HEK293 (cell line): ENCODE measurements at regions of chr6 and their contacts with region 1.

Region 1: DNA sequence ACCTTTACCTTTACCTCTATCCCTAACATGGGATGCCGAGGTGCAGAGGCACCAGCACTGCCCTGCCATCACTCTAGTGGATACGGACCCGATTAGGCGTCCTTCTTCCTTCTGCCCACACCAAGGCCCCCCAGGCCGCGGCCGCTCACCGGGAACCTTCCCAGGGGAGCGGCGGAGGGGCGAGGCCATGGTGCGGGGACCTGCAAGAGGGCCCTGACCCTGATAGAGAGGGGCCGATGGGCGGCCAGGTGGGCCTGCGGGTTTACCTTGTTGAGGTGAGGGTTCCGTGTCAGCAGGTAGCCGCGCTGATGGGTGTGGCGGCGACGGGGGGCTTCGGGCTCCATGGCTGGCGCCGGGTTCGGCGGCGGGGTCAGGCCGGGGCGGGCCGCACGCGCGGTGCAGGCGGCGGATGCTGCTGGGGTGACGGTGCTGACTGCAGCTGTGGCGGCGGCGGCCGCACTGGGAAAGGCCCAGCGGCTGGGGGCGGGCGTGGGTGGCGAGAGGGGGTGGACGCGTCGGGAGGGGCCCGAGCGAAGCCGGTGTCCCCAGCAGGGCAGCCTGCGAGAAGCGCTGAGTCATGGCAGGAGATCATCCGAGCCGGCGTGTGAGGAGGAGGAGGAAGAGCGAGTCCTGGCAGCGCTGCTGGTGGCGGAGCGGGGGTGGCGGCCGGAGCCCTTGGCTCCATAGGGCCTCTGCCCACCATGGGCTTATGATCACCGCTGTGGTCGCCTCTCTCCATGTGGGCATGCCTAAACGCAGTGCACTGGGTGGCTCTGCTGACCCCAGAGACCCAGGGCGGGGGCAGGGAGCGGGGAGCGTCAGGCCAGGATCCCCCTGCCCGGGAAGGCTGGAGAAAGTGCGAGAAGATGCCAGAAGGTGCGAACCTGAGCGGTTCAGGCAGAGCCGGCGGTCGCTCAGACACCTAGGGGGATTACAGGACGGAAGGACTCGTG is at the start of gene ME1:
- H3K4me3 ChIP-seq: peak within 1 kb of the TSS; percentile 83
- H3K27ac ChIP-seq: peak within 1 kb of the TSS; percentile 82
- H3K4me1 ChIP-seq: peaks cover 2% of the 10 kb centered on the region; the same call in 1 of the 2 replicates
- CTCF ChIP-seq: peak; percentile 77

Region 2: GRCh38 chr6:83514866-83515466 is 84.1 kb after region 1 on chr6:
- CTCF ChIA-PET with region 1: interaction called, 16 read pairs
- POLR2A ChIA-PET with region 1: interaction called, 3 read pairs
- H3K4me3 ChIP-seq: no peak overlapping the region
- H3K27ac ChIP-seq: no peak overlapping the region
- H3K4me1 ChIP-seq: no peaks in the 10 kb centered on the region
- CTCF ChIP-seq: peak; percentile 65